Prostate gland (tissue), 2 donors: ENCODE measurements at regions of chr14 and their contacts with region 1.

Region 1: GRCh38 chr14:51507906-51508511 is 143.7 kb upstream of the FRMD6 start:
- DNase-seq: peak; percentile 62
- H3K4me3 ChIP-seq: no peak overlapping the region
- H3K27ac ChIP-seq: peak overlapping the region; percentile 58 to 59
- H3K4me1 ChIP-seq: no peaks in the 10 kb centered on the region
- H3K27me3 ChIP-seq: no peaks in the 10 kb centered on the region
- CTCF ChIP-seq: no peak
- POLR2A ChIP-seq: no peak

Region 2: DNA sequence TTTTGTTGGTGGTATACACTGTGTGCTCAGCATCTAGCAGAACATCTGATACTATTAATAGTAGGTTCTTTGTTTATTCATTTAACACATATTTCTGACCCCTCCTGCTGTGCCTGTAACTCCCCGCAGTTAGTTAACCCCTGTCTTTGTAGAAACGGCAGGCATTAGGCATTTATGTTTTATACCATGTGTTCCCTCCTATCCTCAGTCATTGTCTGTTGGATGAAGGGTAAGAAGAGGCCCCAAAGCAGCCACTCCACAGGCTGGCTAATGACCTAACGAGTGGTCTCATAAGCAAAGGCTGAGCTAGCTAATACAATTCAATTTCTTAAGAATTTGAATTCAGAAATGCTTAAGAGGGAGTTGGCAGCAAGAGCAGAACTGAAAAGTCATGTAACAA is 97.1 kb before region 1 on chr14:
- intact Hi-C with region 1: no loop called
- DNase-seq: no peak
- H3K4me3 ChIP-seq: no peak overlapping the region
- H3K27ac ChIP-seq: no peak overlapping the region
- H3K4me1 ChIP-seq: no peaks in the 10 kb centered on the region
- H3K27me3 ChIP-seq: no peaks in the 10 kb centered on the region
- CTCF ChIP-seq: no peak
- POLR2A ChIP-seq: no peak

Region 3: GRCh38 chr14:51490205-51490604 is 17.8 kb before region 1 on chr14:
- intact Hi-C with region 1: no loop called
- DNase-seq: no peak
- H3K4me3 ChIP-seq: no peak overlapping the region
- H3K27ac ChIP-seq: peak overlapping the region in 1 of 2 donors; percentile 15
- H3K4me1 ChIP-seq: no peaks in the 10 kb centered on the region
- H3K27me3 ChIP-seq: no peaks in the 10 kb centered on the region
- CTCF ChIP-seq: no peak
- POLR2A ChIP-seq: no peak

Region 4: GRCh38 chr14:51547260-51547659 is 39.3 kb after region 1 on chr14:
- intact Hi-C with region 1: loop called (anchors 5 kb)
- DNase-seq: peak; percentile 36
- H3K4me3 ChIP-seq: no peak overlapping the region
- H3K27ac ChIP-seq: peak overlapping the region; percentile 4 to 17
- H3K4me1 ChIP-seq: peaks cover 2% of the 10 kb centered on the region
- H3K27me3 ChIP-seq: no peaks in the 10 kb centered on the region
- CTCF ChIP-seq: no peak
- POLR2A ChIP-seq: no peak